Transverse colon (tissue), 4 donors: ENCODE measurements at regions of chr15 and their contacts with region 1.

Region 1: GRCh38 chr15:48861813-48862431 is 16.0 kb upstream of the EID1 start:
- DNase-seq: peak; percentile 8
- H3K4me3 ChIP-seq: no peak overlapping the region
- H3K27ac ChIP-seq: no peak overlapping the region
- H3K4me1 ChIP-seq: no peaks in the 10 kb centered on the region
- H3K27me3 ChIP-seq: no peaks in the 10 kb centered on the region
- CTCF ChIP-seq: peak; percentile 77 to 91 (median 80)
- EP300 ChIP-seq: no peak
- POLR2A ChIP-seq: no peak

Region 2: GRCh38 chr15:49145651-49146609 is 284.0 kb after region 1 on chr15:
- in situ Hi-C with region 1: loop called in 3 of 4 experiments (anchors 10 kb)
- intact Hi-C with region 1: loop called (anchors 10 kb)
- DNase-seq: no peak
- H3K4me3 ChIP-seq: no peak overlapping the region
- H3K27ac ChIP-seq: no peak overlapping the region
- H3K4me1 ChIP-seq: peaks cover 4 to 44% (median 6%) of the 10 kb centered on the region in 4 donors
- H3K27me3 ChIP-seq: no peaks in the 10 kb centered on the region
- CTCF ChIP-seq: peak; percentile 30 to 62 (median 57)
- EP300 ChIP-seq: no peak
- POLR2A ChIP-seq: no peak

Region 3: DNA sequence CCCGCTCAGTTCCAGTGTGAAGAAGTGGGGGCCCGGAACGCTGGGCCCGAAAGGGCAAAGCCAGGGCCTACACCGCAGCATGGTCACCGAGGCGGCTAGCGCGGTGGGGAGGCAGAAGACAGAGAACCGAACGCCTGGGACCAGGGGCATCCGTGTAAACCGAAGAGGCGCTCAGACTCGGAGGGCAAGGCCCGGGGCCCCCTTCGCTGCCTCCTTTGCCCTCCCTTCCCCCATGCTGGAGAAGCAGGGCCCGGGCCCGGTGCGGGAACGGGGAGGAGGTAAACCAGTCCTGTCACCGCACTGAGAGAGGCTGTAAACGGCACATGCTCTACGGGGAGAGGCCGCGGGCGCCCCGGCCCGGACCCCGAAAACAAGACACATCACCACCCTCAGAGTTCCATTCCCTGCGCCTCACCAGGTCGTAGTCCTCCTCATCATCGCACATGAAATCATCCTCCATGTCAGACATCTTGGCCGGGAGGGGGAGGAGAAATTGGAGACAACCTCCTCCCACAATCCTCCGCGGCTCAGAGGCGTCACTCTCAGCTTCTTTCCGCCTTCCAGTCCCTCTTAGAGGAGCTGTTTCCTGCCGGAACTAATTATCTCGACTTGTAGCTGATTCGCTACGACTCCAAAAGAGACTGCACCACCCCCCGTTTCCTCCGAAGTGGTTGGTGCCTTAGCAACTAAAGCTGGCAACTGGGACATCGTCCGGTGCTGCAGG is 293.4 kb after region 1 on chr15 and contains the start of gene COPS2:
- in situ Hi-C with region 1: loop called in 1 of 4 experiments (anchors 10 kb)
- intact Hi-C with region 1: no loop called
- DNase-seq: peak; percentile 96
- H3K4me3 ChIP-seq: peak within 1 kb of the TSS; percentile 82 to 97 (median 89)
- H3K27ac ChIP-seq: peak within 1 kb of the TSS; percentile 88 to 94 (median 92)
- H3K4me1 ChIP-seq: peaks cover 0 to 45% (median 17%) of the 10 kb centered on the region in 4 donors
- H3K27me3 ChIP-seq: no peaks in the 10 kb centered on the region
- CTCF ChIP-seq: no peak
- EP300 ChIP-seq: no peak
- POLR2A ChIP-seq: peak; percentile 58
- total RNA-seq, gene COPS2: 15.0 to 51.4 (median 24.4) TPM

Region 4: GRCh38 chr15:49415638-49416037 is 553.7 kb after region 1 on chr15:
- in situ Hi-C with region 1: loop called (anchors 10 to 25 kb)
- intact Hi-C with region 1: loop called (anchors 10 kb)
- DNase-seq: no peak
- H3K4me3 ChIP-seq: no peak overlapping the region
- H3K27ac ChIP-seq: no peak overlapping the region
- H3K4me1 ChIP-seq: peaks cover 0 to 2% (median 0%) of the 10 kb centered on the region in 4 donors
- H3K27me3 ChIP-seq: no peaks in the 10 kb centered on the region
- CTCF ChIP-seq: no peak
- EP300 ChIP-seq: no peak
- POLR2A ChIP-seq: no peak

Region 5: GRCh38 chr15:49421991-49422390 is 560.1 kb after region 1 on chr15:
- in situ Hi-C with region 1: loop called (anchors 10 to 25 kb)
- intact Hi-C with region 1: loop called (anchors 10 kb)
- DNase-seq: peak; percentile 24
- H3K4me3 ChIP-seq: peak overlapping the region in 2 of 4 donors; percentile 3 to 43
- H3K27ac ChIP-seq: peak overlapping the region; percentile 71 to 80 (median 72)
- H3K4me1 ChIP-seq: peaks cover 0 to 2% (median 0%) of the 10 kb centered on the region in 4 donors
- H3K27me3 ChIP-seq: no peaks in the 10 kb centered on the region
- CTCF ChIP-seq: peak; percentile 73 to 96 (median 85)
- EP300 ChIP-seq: no peak
- POLR2A ChIP-seq: no peak